Naive thymus-derived CD4-positive, alpha-beta T cell (primary cell): ENCODE measurements at regions of chr1 and their contacts with region 1.

Region 1: GRCh38 chr1:89692601-89693521 is 59.9 kb downstream of the LRRC8C start:
- DNase-seq: no peak
- ATAC-seq: peak; percentile 34
- H3K4me3 ChIP-seq: no peak overlapping the region
- H3K4me3 Mint-ChIP-seq: peak overlapping the region in 7 of 10 donors; percentile 2 to 78 (median 37)
- H3K27ac ChIP-seq: no peak overlapping the region
- H3K27ac Mint-ChIP-seq: peak overlapping the region; percentile 37 to 88 (median 72)
- H3K4me1 ChIP-seq: peaks cover 38 to 50% of the 10 kb centered on the region in 2 donors
- H3K4me1 Mint-ChIP-seq: peaks cover 46 to 98% (median 90%) of the 10 kb centered on the region in 7 donors
- H3K27me3 ChIP-seq: no peaks in the 10 kb centered on the region
- H3K27me3 Mint-ChIP-seq: no peaks in the 10 kb centered on the region

Region 2: DNA sequence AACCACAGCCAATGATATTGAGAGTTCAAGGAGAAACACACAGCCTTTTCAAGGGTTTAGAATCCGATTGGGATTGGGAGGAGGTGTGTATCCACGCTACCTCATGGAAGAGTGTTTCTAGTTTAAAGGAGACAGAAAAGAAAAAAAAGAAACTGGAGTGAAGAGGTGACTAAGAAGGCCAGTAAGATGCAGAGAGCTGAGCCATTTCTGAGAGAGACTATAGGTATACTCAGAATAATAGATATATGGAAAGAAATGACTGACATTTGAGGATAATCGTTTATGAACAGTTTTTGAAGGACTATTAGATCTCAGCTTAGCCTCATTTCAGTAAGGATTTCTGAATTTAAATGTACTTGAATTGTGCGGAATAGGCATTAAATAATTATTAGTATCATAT is 17.2 kb before region 1 on chr1:
- CTCF ChIA-PET with region 1: no interaction called
- POLR2A ChIA-PET with region 1: interaction called, 3 read pairs
- intact Hi-C with region 1: loop called in 1 of 2 experiments (anchors 2 kb)
- DNase-seq: no peak
- ATAC-seq: no peak
- H3K4me3 ChIP-seq: no peak overlapping the region
- H3K4me3 Mint-ChIP-seq: peak overlapping the region in 5 of 10 donors; percentile 12 to 59 (median 44)
- H3K27ac ChIP-seq: no peak overlapping the region
- H3K27ac Mint-ChIP-seq: peak overlapping the region; percentile 6 to 94 (median 39)
- H3K4me1 ChIP-seq: peaks cover 15 to 23% of the 10 kb centered on the region in 2 donors
- H3K4me1 Mint-ChIP-seq: peaks cover 47 to 88% (median 82%) of the 10 kb centered on the region in 7 donors
- H3K27me3 ChIP-seq: no peaks in the 10 kb centered on the region
- H3K27me3 Mint-ChIP-seq: no peaks in the 10 kb centered on the region